Activated CD4-positive, alpha-beta memory T cell treated with anti-CD3 and anti-CD28 coated beads for 36 hours (primary cell): ENCODE measurements at regions of chr11 and their contacts with region 1.

Region 1: GRCh38 chr11:27506200-27507182 is at the start of gene LIN7C:
- DNase-seq: peak; percentile 97
- H3K4me3 Mint-ChIP-seq: peak within 1 kb of the TSS; percentile 100
- H3K27ac Mint-ChIP-seq: peak within 1 kb of the TSS; percentile 93
- H3K4me1 Mint-ChIP-seq: peaks cover 40% of the 10 kb centered on the region
- H3K27me3 Mint-ChIP-seq: no peaks in the 10 kb centered on the region
- total RNA-seq, gene LIN7C: 27.6 to 28.7 TPM

Region 2: GRCh38 chr11:27472398-27473016 is 34.0 kb before region 1 on chr11 and contains the start of gene LGR4:
- CTCF ChIA-PET with region 1: no interaction called
- POLR2A ChIA-PET with region 1: interaction called, 3 read pairs
- intact Hi-C with region 1: loop called (anchors 1 kb)
- DNase-seq: peak; percentile 79
- H3K4me3 Mint-ChIP-seq: peak within 1 kb of the TSS; percentile 86
- H3K27ac Mint-ChIP-seq: no peak within 1 kb of the TSS
- H3K4me1 Mint-ChIP-seq: peaks cover 16% of the 10 kb centered on the region
- H3K27me3 Mint-ChIP-seq: peaks cover 20% of the 10 kb centered on the region
- total RNA-seq, gene LGR4: 0.22 to 0.67 TPM

Region 3: DNA sequence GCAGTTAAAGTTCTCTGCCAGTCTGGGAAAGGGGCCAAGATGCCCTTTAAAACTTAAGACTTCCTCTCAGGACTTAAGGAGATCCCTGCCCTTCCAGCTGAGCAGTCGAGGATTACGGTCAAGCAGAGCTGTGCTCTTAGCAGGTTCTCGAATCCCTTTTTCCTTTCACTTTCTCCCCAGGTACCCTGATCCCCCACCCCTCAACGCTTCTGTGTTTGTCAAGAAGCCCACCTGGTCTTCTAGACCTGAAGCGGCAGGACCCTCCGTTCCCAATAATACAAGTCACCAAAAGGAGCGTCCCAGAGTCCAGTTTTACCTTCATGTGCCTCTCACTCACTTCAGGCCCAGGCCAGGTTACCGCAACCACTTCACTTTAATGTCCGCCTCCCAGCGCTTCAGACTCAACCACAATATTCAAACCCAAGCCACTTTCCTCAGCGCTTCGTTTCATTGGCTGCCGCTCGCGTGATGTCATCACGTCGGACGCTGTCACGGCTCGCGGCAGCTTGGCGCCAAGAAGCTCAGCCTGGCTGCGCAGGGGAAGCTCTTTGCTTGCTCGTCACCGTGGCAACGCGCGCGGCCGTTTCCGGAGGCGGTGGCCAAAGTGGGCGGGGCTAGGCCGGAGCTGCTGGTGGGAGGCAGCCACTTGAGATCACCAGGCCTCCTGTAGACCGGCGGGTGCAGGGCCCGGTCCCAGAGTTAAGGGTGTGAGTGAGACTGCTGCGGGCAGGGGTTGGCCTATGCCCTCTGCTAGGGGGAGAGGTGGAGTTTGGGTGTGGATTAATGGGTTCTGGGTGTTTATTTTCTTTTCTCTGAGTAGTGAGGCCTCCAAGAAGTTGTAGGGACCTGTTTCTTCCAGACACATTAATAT is 601.5 kb after region 1 on chr11 and contains the starts of genes KIF18A and METTL15:
- CTCF ChIA-PET with region 1: no interaction called
- POLR2A ChIA-PET with region 1: no interaction called
- intact Hi-C with region 1: loop called (anchors 1 kb)
- DNase-seq: peak; percentile 99
- H3K4me3 Mint-ChIP-seq: peak within 1 kb of the TSS; percentile 99
- H3K27ac Mint-ChIP-seq: peak within 1 kb of the TSS; percentile 99
- H3K4me1 Mint-ChIP-seq: peaks cover 47% of the 10 kb centered on the region
- H3K27me3 Mint-ChIP-seq: peaks cover 1% of the 10 kb centered on the region
- total RNA-seq, gene KIF18A: 26.4 to 27.3 TPM
- total RNA-seq, gene METTL15: 18.0 to 19.7 TPM